B cell (primary cell): ENCODE measurements at regions of chr11 and their contacts with region 1.

Region 1: GRCh38 chr11:4187055-4187988 is 92.7 kb downstream of the RRM1 start:
- DNase-seq: peak; percentile 83
- ATAC-seq: peak; percentile 95
- H3K4me3 ChIP-seq: peak overlapping the region in 4 of 5 experiments; percentile 22 to 56 (median 46)
- H3K4me3 Mint-ChIP-seq: peak overlapping the region; percentile 80
- H3K27ac ChIP-seq: no peak overlapping the region
- H3K27ac Mint-ChIP-seq: no peak overlapping the region
- H3K4me1 ChIP-seq: peaks cover 4 to 6% of the 10 kb centered on the region in 2 donors
- H3K4me1 Mint-ChIP-seq: peaks cover 8% of the 10 kb centered on the region
- H3K27me3 ChIP-seq: peaks cover 0 to 32% (median 1%) of the 10 kb centered on the region in 4 experiments
- H3K27me3 Mint-ChIP-seq: peaks cover 20% of the 10 kb centered on the region
- CTCF ChIP-seq: peak; percentile 97

Region 2: GRCh38 chr11:4202749-4203148 is 15.4 kb after region 1 on chr11:
- CTCF ChIA-PET with region 1: interaction called, 13 read pairs
- POLR2A ChIA-PET with region 1: no interaction called
- intact Hi-C with region 1: no loop called
- DNase-seq: no peak
- ATAC-seq: no peak
- H3K4me3 ChIP-seq: no peak overlapping the region
- H3K4me3 Mint-ChIP-seq: no peak overlapping the region
- H3K27ac ChIP-seq: no peak overlapping the region
- H3K27ac Mint-ChIP-seq: no peak overlapping the region
- H3K4me1 ChIP-seq: no peaks in the 10 kb centered on the region
- H3K4me1 Mint-ChIP-seq: no peaks in the 10 kb centered on the region
- H3K27me3 ChIP-seq: peaks cover 0 to 8% (median 2%) of the 10 kb centered on the region in 4 experiments
- H3K27me3 Mint-ChIP-seq: peaks cover 48% of the 10 kb centered on the region
- CTCF ChIP-seq: no peak

Region 3: DNA sequence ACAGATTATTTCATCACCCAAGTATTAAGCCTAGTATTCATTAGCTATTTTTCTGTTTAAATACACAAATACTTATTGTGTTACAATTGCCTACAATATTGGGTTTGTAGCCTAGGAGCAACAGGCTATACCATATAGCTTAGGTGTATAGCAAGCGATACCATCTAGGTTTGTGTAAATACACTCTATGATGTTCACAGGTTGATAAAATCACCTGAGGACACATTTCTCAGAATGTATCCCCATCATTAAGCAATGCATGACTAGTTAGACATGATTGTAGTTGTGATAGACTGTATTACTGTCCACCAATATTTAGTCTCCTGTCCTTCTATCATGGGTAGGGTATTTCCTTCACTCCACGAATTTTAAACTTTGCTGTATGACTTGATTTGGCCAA is 303.5 kb after region 1 on chr11:
- CTCF ChIA-PET with region 1: interaction called, 87 read pairs
- POLR2A ChIA-PET with region 1: no interaction called
- intact Hi-C with region 1: loop called (anchors 1 kb)
- DNase-seq: no peak
- ATAC-seq: no peak
- H3K4me3 ChIP-seq: no peak overlapping the region
- H3K4me3 Mint-ChIP-seq: no peak overlapping the region
- H3K27ac ChIP-seq: no peak overlapping the region
- H3K27ac Mint-ChIP-seq: no peak overlapping the region
- H3K4me1 ChIP-seq: peaks cover 0 to 3% of the 10 kb centered on the region in 2 donors
- H3K4me1 Mint-ChIP-seq: peaks cover 8% of the 10 kb centered on the region
- H3K27me3 ChIP-seq: peaks cover 0 to 7% (median 3%) of the 10 kb centered on the region in 4 experiments
- H3K27me3 Mint-ChIP-seq: peaks cover 38% of the 10 kb centered on the region
- CTCF ChIP-seq: no peak

Region 4: GRCh38 chr11:4496557-4497275 is 309.4 kb after region 1 on chr11:
- CTCF ChIA-PET with region 1: interaction called, 87 read pairs
- POLR2A ChIA-PET with region 1: no interaction called
- intact Hi-C with region 1: loop called (anchors 1 kb)
- DNase-seq: no peak
- ATAC-seq: no peak
- H3K4me3 ChIP-seq: no peak overlapping the region
- H3K4me3 Mint-ChIP-seq: no peak overlapping the region
- H3K27ac ChIP-seq: no peak overlapping the region
- H3K27ac Mint-ChIP-seq: no peak overlapping the region
- H3K4me1 ChIP-seq: peaks cover 0 to 3% of the 10 kb centered on the region in 2 donors
- H3K4me1 Mint-ChIP-seq: peaks cover 8% of the 10 kb centered on the region
- H3K27me3 ChIP-seq: peaks cover 0 to 4% (median 0%) of the 10 kb centered on the region in 4 experiments
- H3K27me3 Mint-ChIP-seq: peaks cover 27% of the 10 kb centered on the region
- CTCF ChIP-seq: no peak

Region 5: DNA sequence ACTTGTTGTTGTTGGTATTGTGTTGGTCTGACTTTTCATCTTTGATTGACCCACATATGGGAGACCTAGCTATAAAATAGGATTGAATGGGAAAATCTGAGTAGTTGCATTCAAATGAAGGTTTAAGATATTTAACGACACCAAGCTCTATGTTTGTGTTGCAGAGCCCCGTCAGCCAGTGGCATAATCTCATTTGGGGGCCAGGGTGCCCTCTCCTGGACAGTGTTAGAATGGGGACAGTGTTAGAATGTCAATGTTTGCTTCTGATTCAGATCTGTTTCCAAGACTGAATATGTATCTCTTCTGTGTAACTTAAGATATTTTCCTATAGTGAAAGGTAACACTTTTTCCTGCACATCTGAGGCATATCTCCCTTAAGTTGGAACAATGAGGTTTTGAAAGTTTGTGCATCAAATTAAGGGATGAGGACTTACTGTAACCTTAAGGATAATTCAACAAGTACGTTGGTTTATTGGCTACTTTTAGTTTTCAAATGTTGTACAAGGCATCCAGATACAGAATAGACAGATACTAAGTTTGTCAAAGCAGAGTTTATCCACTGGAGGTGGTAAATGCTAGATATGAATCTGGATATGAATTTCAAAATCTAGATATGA is 352.4 kb after region 1 on chr11:
- CTCF ChIA-PET with region 1: interaction called, 92 read pairs
- POLR2A ChIA-PET with region 1: no interaction called
- intact Hi-C with region 1: loop called (anchors 1 kb)
- DNase-seq: peak; percentile 44
- ATAC-seq: no peak
- H3K4me3 ChIP-seq: no peak overlapping the region
- H3K4me3 Mint-ChIP-seq: no peak overlapping the region
- H3K27ac ChIP-seq: no peak overlapping the region
- H3K27ac Mint-ChIP-seq: no peak overlapping the region
- H3K4me1 ChIP-seq: no peaks in the 10 kb centered on the region
- H3K4me1 Mint-ChIP-seq: no peaks in the 10 kb centered on the region
- H3K27me3 ChIP-seq: peaks cover 0 to 3% (median 0%) of the 10 kb centered on the region in 4 experiments
- H3K27me3 Mint-ChIP-seq: peaks cover 6% of the 10 kb centered on the region
- CTCF ChIP-seq: peak; percentile 72

Region 6: DNA sequence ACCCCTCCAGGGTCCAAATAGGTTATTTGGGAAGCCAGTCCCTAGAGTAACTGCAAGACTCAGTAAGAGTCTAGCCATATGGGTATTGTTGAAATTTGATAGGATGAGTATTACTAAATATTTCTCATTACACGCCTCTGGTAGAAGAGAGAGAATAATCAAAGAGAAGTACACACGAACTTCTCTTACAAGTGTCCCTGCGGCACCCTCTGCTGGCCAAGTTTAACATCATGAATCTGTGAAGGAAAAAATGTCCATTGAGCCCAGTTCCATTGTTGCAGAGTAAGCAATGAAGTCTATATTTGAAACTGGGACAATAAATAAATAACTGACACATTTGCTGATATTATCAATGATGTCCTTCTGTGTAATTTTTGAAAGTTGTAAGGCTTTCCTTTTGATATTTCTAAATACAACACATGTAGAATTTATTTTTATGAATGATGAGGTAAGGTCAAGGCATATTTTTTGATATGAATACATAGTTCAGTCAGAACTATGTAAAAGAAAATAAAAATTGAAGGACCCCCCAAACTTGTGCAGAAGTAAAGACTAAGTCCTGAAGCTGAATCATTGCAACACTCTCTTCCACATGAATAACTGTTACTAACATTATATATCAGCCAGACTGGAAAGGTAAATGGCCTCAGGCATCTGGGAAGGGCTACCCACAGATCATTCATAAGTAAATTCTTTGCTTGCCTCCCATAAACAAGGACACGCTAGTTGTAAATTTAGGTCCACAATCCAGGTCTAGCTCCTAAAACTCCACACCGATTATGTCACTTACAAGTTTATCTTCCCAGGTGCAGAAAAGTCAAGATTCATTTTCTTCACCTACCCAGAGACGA is 817.3 kb after region 1 on chr11:
- CTCF ChIA-PET with region 1: no interaction called
- POLR2A ChIA-PET with region 1: no interaction called
- intact Hi-C with region 1: loop called (anchors 5 kb)
- DNase-seq: peak; percentile 32
- ATAC-seq: no peak
- H3K4me3 ChIP-seq: no peak overlapping the region
- H3K4me3 Mint-ChIP-seq: no peak overlapping the region
- H3K27ac ChIP-seq: no peak overlapping the region
- H3K27ac Mint-ChIP-seq: no peak overlapping the region
- H3K4me1 ChIP-seq: no peaks in the 10 kb centered on the region
- H3K4me1 Mint-ChIP-seq: no peaks in the 10 kb centered on the region
- H3K27me3 ChIP-seq: no peaks in the 10 kb centered on the region
- H3K27me3 Mint-ChIP-seq: peaks cover 9% of the 10 kb centered on the region
- CTCF ChIP-seq: peak; percentile 46

Region 7: GRCh38 chr11:5808500-5809121 is 1621.3 kb after region 1 on chr11 and contains the start of gene OR52N2:
- CTCF ChIA-PET with region 1: no interaction called
- POLR2A ChIA-PET with region 1: no interaction called
- intact Hi-C with region 1: loop called (anchors 2 kb)
- DNase-seq: peak; percentile 84
- ATAC-seq: peak; percentile 91
- H3K4me3 ChIP-seq: peak within 1 kb of the TSS; percentile 52 to 66 (median 64)
- H3K4me3 Mint-ChIP-seq: peak within 1 kb of the TSS; percentile 91
- H3K27ac ChIP-seq: peak within 1 kb of the TSS in 1 of 2 donors; percentile 24
- H3K27ac Mint-ChIP-seq: no peak within 1 kb of the TSS
- H3K4me1 ChIP-seq: peaks cover 10 to 12% of the 10 kb centered on the region in 2 donors
- H3K4me1 Mint-ChIP-seq: peaks cover 12% of the 10 kb centered on the region
- H3K27me3 ChIP-seq: peaks cover 0 to 11% (median 9%) of the 10 kb centered on the region in 4 experiments
- H3K27me3 Mint-ChIP-seq: peaks cover 39% of the 10 kb centered on the region
- CTCF ChIP-seq: peak; percentile 93
- total RNA-seq, gene OR52N2: not detected in 2 replicates